HEK293 (cell line): ENCODE measurements at regions of chr19 and their contacts with region 1.

Region 1: GRCh38 chr19:3324321-3324856 is 42.0 kb upstream of the NFIC start:
- H3K4me3 ChIP-seq: no peak overlapping the region
- H3K27ac ChIP-seq: no peak overlapping the region
- H3K4me1 ChIP-seq: no peaks in the 10 kb centered on the region
- CTCF ChIP-seq: peak; percentile 84

Region 2: DNA sequence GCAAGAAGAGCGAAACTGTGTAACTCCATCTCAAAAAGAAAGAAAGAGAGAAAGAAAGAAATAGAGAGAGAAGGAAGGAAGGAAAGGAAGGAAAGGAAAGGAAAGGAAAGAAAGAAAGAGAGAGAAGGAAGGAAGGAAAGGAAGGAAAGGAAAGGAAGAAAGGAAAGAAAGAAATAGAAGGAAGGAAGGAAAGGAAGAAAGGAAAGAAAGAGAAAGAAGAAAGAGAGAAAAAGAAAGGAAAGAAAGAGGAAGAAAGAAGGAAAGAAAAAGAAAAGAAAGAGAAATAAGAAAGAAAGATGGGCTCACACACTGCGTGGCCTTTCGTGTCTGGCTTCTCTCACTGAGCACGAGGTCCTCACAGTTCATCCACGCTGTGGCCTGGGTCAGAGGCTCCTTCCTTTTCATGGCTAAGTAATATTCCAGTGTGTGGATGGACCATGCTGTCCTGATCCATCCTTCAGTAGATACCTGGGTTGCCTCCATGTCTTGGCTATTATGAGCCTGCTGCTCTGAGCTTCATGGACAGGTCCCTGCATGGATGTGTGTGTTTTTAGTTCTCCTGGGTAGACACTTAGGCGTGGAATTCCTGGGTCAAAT is 25.4 kb before region 1 on chr19:
- CTCF ChIA-PET with region 1: no interaction called
- POLR2A ChIA-PET with region 1: no interaction called
- H3K4me3 ChIP-seq: no peak overlapping the region
- H3K27ac ChIP-seq: no peak overlapping the region
- H3K4me1 ChIP-seq: no peaks in the 10 kb centered on the region
- CTCF ChIP-seq: no peak

Region 3: DNA sequence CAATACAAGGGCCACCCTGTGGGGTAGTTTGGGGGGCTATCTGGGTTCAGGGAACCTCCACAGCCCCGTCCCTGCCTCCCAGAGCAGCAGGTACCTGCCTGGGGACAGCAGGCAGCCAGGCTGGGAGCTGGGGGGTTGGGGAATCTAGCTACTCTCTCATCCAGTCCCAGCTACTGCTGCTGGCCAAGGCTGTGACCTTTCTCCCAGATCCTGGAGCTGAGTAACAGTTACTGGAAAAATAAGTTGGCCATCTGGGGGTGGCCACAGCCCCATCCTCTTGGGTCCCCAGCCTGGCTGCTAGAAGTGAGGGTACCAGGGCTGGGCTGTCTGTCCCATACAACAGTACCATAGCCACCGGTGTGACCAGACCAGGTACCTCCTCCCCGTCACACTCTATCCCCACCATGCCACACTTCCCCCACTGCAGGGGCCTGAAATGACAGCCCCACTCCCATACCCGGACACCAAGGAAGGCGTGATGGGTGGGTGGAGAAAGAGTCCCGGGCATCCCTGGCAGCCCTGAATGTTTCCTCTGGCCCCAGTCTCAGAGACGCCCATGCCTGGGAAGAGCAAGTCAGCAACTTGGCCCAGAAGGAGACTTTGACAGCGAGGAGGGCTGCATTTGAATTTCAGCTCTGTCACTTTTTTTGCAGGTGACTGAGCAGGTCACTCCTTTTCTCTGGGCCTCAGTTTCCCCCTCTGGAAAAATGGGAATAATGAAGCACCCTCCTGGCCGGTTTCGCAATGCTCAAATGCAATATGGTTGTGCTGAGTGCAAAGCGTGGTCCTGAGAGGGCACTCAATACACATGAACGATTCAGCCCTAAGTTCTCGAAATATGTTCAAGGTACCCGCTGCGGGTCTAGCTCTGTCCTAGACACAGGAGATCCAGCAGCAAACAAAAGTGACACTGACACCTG is 11.3 kb after region 1 on chr19:
- CTCF ChIA-PET with region 1: interaction called, 12 read pairs
- POLR2A ChIA-PET with region 1: no interaction called
- H3K4me3 ChIP-seq: no peak overlapping the region
- H3K27ac ChIP-seq: no peak overlapping the region
- H3K4me1 ChIP-seq: no peaks in the 10 kb centered on the region
- CTCF ChIP-seq: no peak

Region 4: DNA sequence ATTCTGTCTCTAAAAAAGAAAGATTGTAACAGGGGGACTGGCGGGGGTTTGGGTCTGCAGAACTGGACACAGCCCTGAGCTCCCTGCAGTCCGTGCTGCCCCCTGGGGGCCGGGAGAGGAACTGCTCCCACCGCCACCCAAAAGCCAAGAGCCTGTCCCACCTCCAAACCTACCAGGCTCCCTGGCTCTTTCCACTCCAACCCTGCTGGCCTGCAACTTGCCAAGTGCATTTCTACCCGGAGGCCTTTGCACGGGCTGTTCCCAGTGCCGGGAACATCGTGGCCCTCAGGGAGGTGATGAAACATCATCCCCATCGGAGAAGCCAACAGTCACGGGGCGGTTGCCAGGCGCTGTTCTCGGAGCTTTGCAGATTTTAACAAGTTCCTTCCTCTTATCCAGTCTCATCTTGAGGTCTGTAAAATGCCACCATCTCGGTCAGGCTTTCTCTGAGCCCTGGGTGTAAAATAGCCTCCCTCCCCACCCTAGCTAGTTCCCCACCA is 105.2 kb after region 1 on chr19:
- CTCF ChIA-PET with region 1: interaction called, 45 read pairs
- POLR2A ChIA-PET with region 1: interaction called, 4 read pairs
- H3K4me3 ChIP-seq: no peak overlapping the region
- H3K27ac ChIP-seq: no peak overlapping the region
- H3K4me1 ChIP-seq: no peaks in the 10 kb centered on the region
- CTCF ChIP-seq: peak; percentile 87

Region 5: GRCh38 chr19:3440082-3440481 is 115.7 kb after region 1 on chr19:
- CTCF ChIA-PET with region 1: no interaction called
- POLR2A ChIA-PET with region 1: no interaction called
- H3K4me3 ChIP-seq: no peak overlapping the region
- H3K27ac ChIP-seq: no peak overlapping the region
- H3K4me1 ChIP-seq: no peaks in the 10 kb centered on the region
- CTCF ChIP-seq: no peak

Region 6: DNA sequence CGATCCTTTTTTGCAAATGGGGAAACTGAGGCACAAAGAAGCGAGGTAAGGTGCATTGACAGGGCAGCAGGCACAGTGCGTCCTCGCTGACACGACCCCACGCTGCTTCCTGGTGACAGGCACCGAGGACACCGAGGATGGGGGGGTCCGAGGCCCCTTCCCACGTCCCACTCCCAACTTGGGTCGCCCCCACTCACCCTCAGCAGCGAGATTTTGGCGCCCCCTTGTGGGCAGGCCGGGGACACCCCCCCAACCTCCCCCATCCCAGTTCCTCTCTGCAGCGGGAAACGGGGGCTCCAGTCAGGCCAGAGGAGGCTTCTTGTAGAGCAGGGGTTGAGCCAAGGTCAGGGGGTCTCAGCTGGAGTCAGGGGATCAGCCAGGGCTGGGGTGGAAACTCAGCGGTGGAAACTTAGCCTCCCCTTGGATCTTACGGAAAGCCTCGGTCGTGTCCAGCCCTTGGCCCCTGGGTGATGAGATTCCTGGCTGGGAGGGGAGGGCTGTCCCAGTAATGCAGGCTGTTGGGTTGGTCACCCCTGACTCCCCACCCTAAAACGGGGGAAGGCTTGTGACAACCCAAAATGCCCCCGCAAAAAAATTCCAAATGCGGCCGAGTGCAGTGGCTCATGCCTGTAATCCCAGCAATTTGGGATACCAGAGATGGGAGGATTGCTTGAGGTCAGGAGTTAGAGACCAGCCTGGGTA is 147.7 kb after region 1 on chr19:
- CTCF ChIA-PET with region 1: interaction called, 107 read pairs
- POLR2A ChIA-PET with region 1: no interaction called
- H3K4me3 ChIP-seq: no peak overlapping the region
- H3K27ac ChIP-seq: no peak overlapping the region
- H3K4me1 ChIP-seq: no peaks in the 10 kb centered on the region
- CTCF ChIP-seq: peak; percentile 79

Region 7: DNA sequence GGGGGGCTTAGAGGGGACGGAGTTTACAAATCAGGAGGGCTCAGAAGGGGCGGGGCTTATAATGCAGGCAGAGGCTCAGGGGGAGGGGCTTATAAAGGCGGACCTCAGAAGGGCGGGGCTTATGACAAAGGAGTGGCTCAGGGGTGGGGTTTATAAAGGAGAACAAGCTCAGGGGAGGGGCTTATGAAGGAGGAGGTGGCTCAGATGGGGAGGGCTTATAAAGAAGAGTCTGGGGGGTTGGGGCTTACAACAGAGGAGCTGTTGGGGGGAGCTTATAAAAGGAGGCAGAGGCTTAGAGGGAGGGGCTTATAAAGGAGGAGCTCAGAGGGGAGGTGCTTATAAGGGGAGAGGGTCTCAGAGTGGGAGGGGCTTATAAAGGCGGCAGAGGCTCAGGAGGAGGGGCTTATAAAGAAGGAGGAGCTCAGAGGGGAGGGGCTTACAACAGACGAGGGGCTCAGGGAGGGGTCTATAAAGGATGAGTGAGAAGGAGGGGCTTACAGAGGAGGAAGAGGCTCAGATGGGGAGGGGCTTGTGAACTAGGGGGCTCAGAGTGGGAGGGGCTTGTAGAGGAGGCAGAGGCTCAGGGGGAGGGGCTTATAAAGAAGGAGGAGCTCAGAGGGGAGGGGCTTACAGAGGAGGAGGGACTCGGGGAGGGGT is 154.9 kb after region 1 on chr19:
- CTCF ChIA-PET with region 1: interaction called, 25 read pairs
- POLR2A ChIA-PET with region 1: interaction called, 6 read pairs
- H3K4me3 ChIP-seq: no peak overlapping the region
- H3K27ac ChIP-seq: no peak overlapping the region
- H3K4me1 ChIP-seq: no peaks in the 10 kb centered on the region
- CTCF ChIP-seq: no peak